PC-3 (cell line): ENCODE measurements at regions of chr1 and their contacts with region 1.

Region 1: GRCh38 chr1:227437495-227438008 is 119.3 kb upstream of the CDC42BPA start:
- DNase-seq: peak; percentile 90
- ATAC-seq: peak; percentile 84
- H3K4me3 ChIP-seq: peak overlapping the region; percentile 65
- H3K27ac ChIP-seq: no peak overlapping the region
- H3K4me1 ChIP-seq: no peaks in the 10 kb centered on the region
- H3K27me3 ChIP-seq: no peaks in the 10 kb centered on the region
- CTCF ChIP-seq: peak; percentile 98

Region 2: DNA sequence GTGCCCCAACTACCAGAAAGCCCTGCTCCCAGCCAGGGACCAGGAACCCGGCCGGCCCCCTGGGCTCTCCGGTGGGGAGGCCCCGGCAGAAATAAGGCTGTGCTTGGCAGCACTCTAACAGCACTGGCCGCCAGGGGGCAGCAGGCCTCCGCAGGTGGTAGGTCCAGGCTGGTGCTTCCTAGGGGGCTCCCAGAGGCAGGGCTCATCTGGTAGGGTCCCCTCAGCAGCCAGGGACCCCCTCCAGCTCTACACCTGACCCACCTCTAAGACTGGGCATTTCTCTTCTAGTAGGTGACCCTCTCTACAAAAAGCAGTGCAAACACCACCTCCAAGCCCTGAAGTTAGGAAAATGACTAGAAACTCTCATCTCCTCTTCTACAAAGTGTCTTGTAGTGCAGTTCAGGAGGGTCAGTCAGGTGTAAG is 803.4 kb before region 1 on chr1:
- CTCF ChIA-PET with region 1: no interaction called
- POLR2A ChIA-PET with region 1: no interaction called
- intact Hi-C with region 1: loop called (anchors 1 kb)
- DNase-seq: peak; percentile 88
- ATAC-seq: peak; percentile 91
- H3K4me3 ChIP-seq: no peak overlapping the region
- H3K27ac ChIP-seq: peak overlapping the region; percentile 72; the same call in 1 of the 2 replicates
- H3K4me1 ChIP-seq: peaks cover 21% of the 10 kb centered on the region
- H3K27me3 ChIP-seq: no peaks in the 10 kb centered on the region
- CTCF ChIP-seq: peak; percentile 100

Region 3: GRCh38 chr1:226912587-226913176 is 524.9 kb before region 1 on chr1:
- CTCF ChIA-PET with region 1: interaction called, 5 read pairs
- POLR2A ChIA-PET with region 1: no interaction called
- intact Hi-C with region 1: loop called (anchors 1 kb)
- DNase-seq: peak; percentile 60
- ATAC-seq: peak; percentile 83
- H3K4me3 ChIP-seq: no peak overlapping the region
- H3K27ac ChIP-seq: no peak overlapping the region
- H3K4me1 ChIP-seq: no peaks in the 10 kb centered on the region
- H3K27me3 ChIP-seq: no peaks in the 10 kb centered on the region
- CTCF ChIP-seq: peak; percentile 83

Region 4: DNA sequence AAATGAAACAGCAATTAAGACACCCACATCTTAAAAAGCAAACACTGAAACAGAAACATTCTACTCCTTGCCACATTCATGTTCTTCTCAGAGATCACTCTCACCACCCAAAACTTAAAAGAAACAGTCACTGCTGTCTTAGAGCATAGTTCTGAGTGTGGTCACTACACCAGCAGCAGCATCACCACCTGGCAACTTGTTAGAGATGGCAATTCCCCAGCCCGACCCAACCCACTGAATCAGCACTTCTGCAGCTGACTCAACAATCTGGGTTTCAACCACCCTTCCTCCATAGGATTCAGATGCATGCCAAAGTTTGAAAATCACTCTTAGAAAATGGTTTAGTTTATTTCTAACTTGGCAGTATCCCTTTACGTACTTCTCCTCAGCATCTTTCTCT is 245.4 kb before region 1 on chr1:
- CTCF ChIA-PET with region 1: no interaction called
- POLR2A ChIA-PET with region 1: no interaction called
- intact Hi-C with region 1: loop called (anchors 1 kb)
- DNase-seq: peak; percentile 99
- ATAC-seq: peak; percentile 100
- H3K4me3 ChIP-seq: no peak overlapping the region
- H3K27ac ChIP-seq: peak overlapping the region; percentile 39
- H3K4me1 ChIP-seq: peaks cover 13% of the 10 kb centered on the region
- H3K27me3 ChIP-seq: no peaks in the 10 kb centered on the region
- CTCF ChIP-seq: no peak

Region 5: DNA sequence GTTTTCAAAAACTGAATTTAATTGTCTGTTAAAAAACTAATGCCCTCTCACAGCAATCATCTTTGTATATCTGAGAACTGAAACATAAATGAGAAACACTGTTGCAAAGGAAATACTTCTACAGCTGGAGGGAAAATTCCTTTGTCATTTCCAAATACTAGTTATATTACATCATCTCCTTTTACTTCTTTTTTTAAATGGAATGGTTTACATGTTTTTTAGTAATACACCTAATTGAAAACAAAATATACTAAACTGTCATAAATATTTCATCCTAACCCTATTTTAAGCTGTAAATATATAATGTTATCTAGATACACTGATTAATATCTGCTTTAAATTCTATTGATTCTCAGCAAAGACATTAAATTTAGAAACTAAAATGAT is 138.3 kb before region 1 on chr1:
- CTCF ChIA-PET with region 1: no interaction called
- POLR2A ChIA-PET with region 1: no interaction called
- intact Hi-C with region 1: loop called (anchors 1 kb)
- DNase-seq: peak; percentile 49
- ATAC-seq: peak; percentile 48; the same call in 1 of the 2 replicates
- H3K4me3 ChIP-seq: peak overlapping the region; percentile 10; the same call in 1 of the 2 replicates
- H3K27ac ChIP-seq: peak overlapping the region; percentile 10; the same call in 1 of the 2 replicates
- H3K4me1 ChIP-seq: peaks cover 22% of the 10 kb centered on the region
- H3K27me3 ChIP-seq: no peaks in the 10 kb centered on the region
- CTCF ChIP-seq: no peak